MCF 10A (cell line): ENCODE measurements at regions of chr15 and their contacts with region 1.

Region 1: DNA sequence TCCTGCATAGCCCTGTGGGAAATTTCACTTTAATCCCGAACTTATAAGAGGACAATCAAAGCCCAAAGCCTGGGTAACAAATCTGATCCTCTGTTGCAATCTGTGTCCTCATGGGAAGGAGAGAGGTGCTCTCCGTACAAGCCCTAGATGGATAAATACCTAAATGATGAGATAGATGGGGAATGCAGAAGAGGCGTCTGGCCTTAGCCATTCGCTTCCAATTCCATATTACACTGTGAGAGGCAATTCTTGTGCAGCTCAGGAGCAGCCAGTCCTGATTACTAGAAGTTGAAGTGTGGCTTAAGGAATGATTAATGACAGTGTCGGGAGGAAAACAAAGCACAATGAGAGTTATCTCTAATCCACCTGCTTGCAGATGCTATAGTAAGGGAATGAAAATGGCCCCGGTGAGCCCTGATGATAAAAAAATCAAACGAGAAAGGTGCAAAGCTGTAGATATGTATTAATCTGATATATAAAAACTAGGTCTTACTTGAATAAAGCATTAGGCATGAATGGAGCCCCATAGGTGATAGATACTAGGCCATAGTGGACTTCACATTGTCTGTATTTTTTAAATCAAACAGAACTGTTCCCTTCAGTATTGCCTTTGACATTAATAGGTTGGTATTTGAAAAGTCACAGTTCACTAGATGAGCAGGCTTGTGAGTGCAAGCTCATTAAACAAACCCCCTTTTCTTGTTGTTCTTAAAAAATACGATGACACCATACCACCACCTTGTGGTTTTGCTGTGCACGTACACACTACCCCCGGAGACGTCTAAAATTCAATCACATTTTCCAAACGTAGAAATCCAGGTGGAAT is 54.2 kb upstream of the TMCO5A start:
- DNase-seq: peak; percentile 34
- H3K4me3 Mint-ChIP-seq: no peak overlapping the region
- H3K27ac Mint-ChIP-seq: no peak overlapping the region
- H3K4me1 Mint-ChIP-seq: peaks cover 11% of the 10 kb centered on the region
- H3K27me3 Mint-ChIP-seq: peaks cover 98% of the 10 kb centered on the region
- CTCF ChIP-seq: peak; percentile 68

Region 2: DNA sequence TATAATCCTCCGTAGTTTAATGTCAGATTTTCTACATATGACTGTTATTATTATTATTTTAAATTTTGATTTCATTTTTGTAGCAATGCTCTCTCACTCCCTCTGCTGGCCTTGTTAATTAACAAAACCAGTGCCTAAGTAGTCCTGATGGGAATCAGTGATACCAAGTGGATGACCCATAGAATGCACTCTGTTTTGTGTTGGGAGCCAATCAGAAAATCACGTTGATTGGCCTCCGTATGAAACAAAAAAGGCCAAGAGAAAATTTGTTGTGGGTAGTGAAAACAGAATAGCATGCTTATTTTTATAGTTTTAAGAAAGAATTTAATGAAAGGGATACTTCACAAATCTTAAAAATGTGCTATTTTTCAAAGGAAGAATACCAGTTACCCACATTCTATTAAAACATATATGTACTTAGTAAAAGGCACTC is 745.5 kb before region 1 on chr15:
- CTCF ChIA-PET with region 1: interaction called, 5 read pairs
- POLR2A ChIA-PET with region 1: no interaction called
- intact Hi-C with region 1: loop called (anchors 1 kb)
- DNase-seq: peak; percentile 64
- H3K4me3 Mint-ChIP-seq: no peak overlapping the region
- H3K27ac Mint-ChIP-seq: no peak overlapping the region
- H3K4me1 Mint-ChIP-seq: peaks cover 9% of the 10 kb centered on the region
- H3K27me3 Mint-ChIP-seq: peaks cover 47% of the 10 kb centered on the region
- CTCF ChIP-seq: no peak

Region 3: DNA sequence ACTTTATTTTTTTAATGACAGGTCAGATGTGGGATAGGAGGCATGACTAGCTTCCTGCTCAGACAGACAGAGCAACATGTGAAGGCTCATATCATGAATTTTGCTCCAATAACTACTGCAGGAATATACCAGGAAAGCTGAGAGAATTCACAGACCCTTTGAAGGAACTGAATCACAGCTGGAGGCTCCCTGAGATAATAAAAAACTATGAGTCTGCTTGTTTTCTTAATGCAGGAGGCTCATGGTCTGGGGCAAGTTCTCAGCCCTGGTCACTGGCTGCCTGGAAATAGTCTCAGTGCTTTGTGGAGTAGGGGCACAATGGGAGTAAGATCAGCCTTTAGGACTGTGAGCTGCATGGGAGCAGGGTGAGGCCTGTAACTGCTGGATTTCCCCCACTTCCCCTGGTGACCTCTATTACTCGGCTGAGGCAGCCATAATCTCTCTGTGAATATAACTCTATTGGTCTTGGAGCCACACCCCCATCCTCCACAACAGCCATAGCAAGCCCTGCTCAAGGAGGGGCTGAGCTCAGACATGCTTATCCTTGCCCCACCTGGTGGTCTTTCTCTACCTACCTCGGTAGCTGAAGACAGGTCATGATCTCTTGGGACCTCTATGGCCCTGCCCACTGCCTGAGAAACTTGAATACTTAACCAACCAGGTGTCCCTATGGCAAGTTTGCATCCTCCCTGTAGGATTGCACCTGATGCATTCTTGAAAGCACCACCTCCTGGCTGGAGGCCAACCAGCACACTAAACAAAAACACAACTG is 227.4 kb before region 1 on chr15:
- CTCF ChIA-PET with region 1: no interaction called
- POLR2A ChIA-PET with region 1: no interaction called
- intact Hi-C with region 1: no loop called
- DNase-seq: no peak
- H3K4me3 Mint-ChIP-seq: no peak overlapping the region
- H3K27ac Mint-ChIP-seq: no peak overlapping the region
- H3K4me1 Mint-ChIP-seq: no peaks in the 10 kb centered on the region
- H3K27me3 Mint-ChIP-seq: no peaks in the 10 kb centered on the region
- CTCF ChIP-seq: no peak

Region 4: DNA sequence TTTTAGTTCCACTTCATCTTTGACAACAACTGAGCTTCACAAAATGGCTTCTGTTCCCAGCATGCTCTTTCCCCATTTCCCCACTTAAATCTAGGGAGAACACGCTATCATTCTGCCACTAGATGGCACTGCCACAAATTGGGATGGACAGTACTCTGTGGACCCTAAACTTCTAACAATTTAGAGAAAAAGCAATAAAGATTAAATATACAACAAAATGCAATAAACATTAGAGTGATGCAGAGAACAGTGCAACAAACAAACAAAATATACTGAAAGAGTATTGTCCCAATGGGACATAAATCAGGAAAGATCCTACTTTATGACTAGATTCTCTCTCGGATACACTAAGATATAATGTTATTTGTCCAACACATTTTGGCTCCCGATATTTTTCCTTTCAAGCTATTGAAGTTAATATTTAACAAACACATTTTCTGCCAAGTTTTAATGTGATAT is 115.5 kb before region 1 on chr15:
- CTCF ChIA-PET with region 1: no interaction called
- POLR2A ChIA-PET with region 1: no interaction called
- intact Hi-C with region 1: loop called (anchors 2 kb)
- DNase-seq: peak; percentile 63
- H3K4me3 Mint-ChIP-seq: no peak overlapping the region
- H3K27ac Mint-ChIP-seq: no peak overlapping the region
- H3K4me1 Mint-ChIP-seq: no peaks in the 10 kb centered on the region
- H3K27me3 Mint-ChIP-seq: peaks cover 11% of the 10 kb centered on the region
- CTCF ChIP-seq: peak; percentile 34

Region 5: GRCh38 chr15:37891766-37892368 is 11.6 kb after region 1 on chr15:
- CTCF ChIA-PET with region 1: interaction called, 49 read pairs
- POLR2A ChIA-PET with region 1: no interaction called
- intact Hi-C with region 1: no loop called
- DNase-seq: peak; percentile 47
- H3K4me3 Mint-ChIP-seq: no peak overlapping the region
- H3K27ac Mint-ChIP-seq: no peak overlapping the region
- H3K4me1 Mint-ChIP-seq: no peaks in the 10 kb centered on the region
- H3K27me3 Mint-ChIP-seq: peaks cover 60% of the 10 kb centered on the region
- CTCF ChIP-seq: peak; percentile 90